AG04449 (cell line): ENCODE measurements at regions of chr12 and their contacts with region 1.

Region 1: DNA sequence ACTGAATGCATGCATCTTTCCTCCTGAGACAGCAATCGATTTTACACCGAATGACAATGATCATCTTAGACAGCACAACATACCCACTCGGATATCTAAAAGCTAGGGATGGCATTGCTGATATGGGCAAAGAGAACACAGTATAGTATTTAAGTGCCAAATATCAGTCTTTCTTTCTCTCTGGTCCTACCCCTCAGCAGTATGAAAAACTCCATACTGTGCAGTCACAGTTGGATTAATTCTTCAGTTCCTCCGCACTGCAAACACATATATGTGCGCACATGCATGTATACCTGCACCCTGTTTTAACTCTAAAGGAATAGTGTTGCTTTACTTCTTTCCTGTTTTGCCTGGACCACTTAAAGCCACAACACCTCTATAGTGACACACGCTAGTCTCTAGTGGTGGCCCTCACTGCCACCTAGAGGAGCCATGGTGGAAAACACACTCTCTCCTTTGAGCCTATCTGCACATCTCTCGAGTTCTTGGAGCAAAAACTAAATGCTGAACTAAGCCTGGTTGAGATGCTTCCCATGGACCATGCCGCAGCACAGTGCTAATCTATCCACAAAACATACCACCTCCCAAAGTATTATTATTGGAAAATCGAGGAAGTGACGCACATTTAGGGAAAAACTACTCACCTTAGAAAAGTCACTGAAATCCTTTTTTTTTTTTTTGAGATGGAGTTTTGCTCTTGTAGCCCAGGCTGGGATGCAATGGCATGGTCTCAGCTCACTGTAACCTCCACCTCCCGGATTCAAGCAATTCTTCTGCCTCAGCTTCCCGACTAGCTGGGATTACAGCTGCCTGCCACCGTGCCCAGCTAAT is 11.9 kb downstream of the TMEM52B start:
- DNase-seq: no peak
- H3K4me3 ChIP-seq: no peak overlapping the region
- CTCF ChIP-seq: peak; percentile 86

Region 2: GRCh38 chr12:9741726-9742125 is 449.0 kb before region 1 on chr12:
- CTCF ChIA-PET with region 1: no interaction called
- POLR2A ChIA-PET with region 1: no interaction called
- DNase-seq: no peak
- H3K4me3 ChIP-seq: no peak overlapping the region
- CTCF ChIP-seq: no peak

Region 3: DNA sequence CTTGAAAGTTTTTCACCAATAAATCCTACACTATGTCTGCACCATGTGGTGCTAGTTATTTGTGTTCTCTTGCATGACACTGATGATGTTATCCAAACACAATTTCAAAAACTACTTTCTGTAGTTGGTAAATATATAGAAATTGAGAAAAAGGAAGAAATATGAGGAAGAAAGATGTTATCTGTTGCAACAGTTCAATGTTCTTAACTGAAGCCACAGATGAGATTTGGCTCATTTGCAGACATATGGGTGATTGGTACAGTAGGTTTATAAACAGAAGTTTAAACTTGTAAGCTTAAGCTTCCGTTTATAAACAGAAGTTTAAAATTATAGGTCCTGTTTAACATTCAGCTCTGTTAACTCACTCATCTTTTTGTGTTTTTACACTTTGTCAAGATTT is 219.6 kb before region 1 on chr12 and contains the start of gene CLEC12A:
- CTCF ChIA-PET with region 1: no interaction called
- POLR2A ChIA-PET with region 1: no interaction called
- DNase-seq: no peak
- H3K4me3 ChIP-seq: no peak within 1 kb of the TSS
- CTCF ChIP-seq: no peak

Region 4: DNA sequence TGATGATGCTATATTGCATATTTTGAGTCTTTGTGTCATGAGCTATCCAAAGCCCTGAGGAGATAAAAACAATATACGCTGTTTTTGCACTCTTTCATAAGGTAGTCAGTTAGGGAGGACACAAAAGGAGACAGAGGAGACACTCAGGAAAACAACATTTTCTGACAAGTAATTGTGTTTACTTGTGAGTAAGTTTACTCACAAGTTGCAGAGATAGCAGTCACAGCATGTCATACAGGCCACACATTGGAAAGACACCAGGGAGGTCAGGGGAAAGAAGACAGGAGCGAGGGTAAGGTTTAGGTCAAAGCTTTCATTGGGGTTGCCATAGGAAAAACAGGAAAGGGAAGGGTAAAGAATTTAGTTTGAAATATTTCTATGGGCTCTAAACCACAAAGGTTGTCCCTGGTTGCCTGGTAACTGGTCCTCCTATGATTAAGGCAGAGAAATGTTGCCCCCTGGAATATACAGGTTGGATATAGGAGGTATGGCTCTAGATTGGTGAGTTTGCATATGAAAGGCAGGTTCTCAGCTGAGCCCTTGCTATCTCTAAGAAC is 14.6 kb after region 1 on chr12:
- CTCF ChIA-PET with region 1: interaction called, 11 read pairs
- POLR2A ChIA-PET with region 1: no interaction called
- DNase-seq: no peak
- H3K4me3 ChIP-seq: no peak overlapping the region
- CTCF ChIP-seq: no peak

Region 5: GRCh38 chr12:10364815-10365622 is 174.2 kb after region 1 on chr12:
- CTCF ChIA-PET with region 1: no interaction called
- POLR2A ChIA-PET with region 1: no interaction called
- DNase-seq: no peak
- H3K4me3 ChIP-seq: peak overlapping the region; percentile 69
- CTCF ChIP-seq: no peak